ENCODE measurements at regions of chr7 and their contacts with region 1.

Region 1: GRCh38 chr7:142557971-142558582 is 191.2 kb upstream of the PRSS1 start:
- DNase-seq: peak; percentile 56
- CTCF ChIP-seq: peak; percentile 91

Region 2: GRCh38 chr7:142523821-142524460 is 34.1 kb before region 1 on chr7:
- CTCF ChIA-PET with region 1: interaction called, 11 read pairs
- POLR2A ChIA-PET with region 1: no interaction called
- DNase-seq: no peak
- CTCF ChIP-seq: no peak

Region 3: GRCh38 chr7:142542942-142543341 is 15.1 kb before region 1 on chr7:
- CTCF ChIA-PET with region 1: interaction called, 16 read pairs
- POLR2A ChIA-PET with region 1: no interaction called
- DNase-seq: no peak
- CTCF ChIP-seq: no peak

Region 4: GRCh38 chr7:142568435-142569097 is 10.5 kb after region 1 on chr7:
- CTCF ChIA-PET with region 1: interaction called, 17 read pairs
- POLR2A ChIA-PET with region 1: no interaction called
- DNase-seq: no peak
- CTCF ChIP-seq: no peak

Region 5: GRCh38 chr7:142581346-142581745 is 23.3 kb after region 1 on chr7:
- CTCF ChIA-PET with region 1: interaction called, 49 read pairs
- POLR2A ChIA-PET with region 1: interaction called, 4 read pairs
- DNase-seq: peak; percentile 42
- CTCF ChIP-seq: no peak